A673 (cell line): ENCODE measurements at regions of chr22 and their contacts with region 1.

Region 1: GRCh38 chr22:36123673-36124630 is 36.6 kb downstream of the APOL3 start:
- DNase-seq: peak; percentile 98
- H3K4me3 ChIP-seq: no peak overlapping the region
- H3K27ac ChIP-seq: peak overlapping the region; percentile 63
- H3K4me1 ChIP-seq: peaks cover 8% of the 10 kb centered on the region
- H3K27me3 ChIP-seq: no peaks in the 10 kb centered on the region
- CTCF ChIP-seq: peak; percentile 99

Region 2: GRCh38 chr22:35430897-35431322 is 693.0 kb before region 1 on chr22:
- CTCF ChIA-PET with region 1: interaction called, 3 read pairs
- POLR2A ChIA-PET with region 1: no interaction called
- intact Hi-C with region 1: loop called (anchors 5 kb)
- DNase-seq: peak; percentile 84
- H3K4me3 ChIP-seq: no peak overlapping the region
- H3K27ac ChIP-seq: no peak overlapping the region
- H3K4me1 ChIP-seq: no peaks in the 10 kb centered on the region
- H3K27me3 ChIP-seq: no peaks in the 10 kb centered on the region
- CTCF ChIP-seq: peak; percentile 96

Region 3: DNA sequence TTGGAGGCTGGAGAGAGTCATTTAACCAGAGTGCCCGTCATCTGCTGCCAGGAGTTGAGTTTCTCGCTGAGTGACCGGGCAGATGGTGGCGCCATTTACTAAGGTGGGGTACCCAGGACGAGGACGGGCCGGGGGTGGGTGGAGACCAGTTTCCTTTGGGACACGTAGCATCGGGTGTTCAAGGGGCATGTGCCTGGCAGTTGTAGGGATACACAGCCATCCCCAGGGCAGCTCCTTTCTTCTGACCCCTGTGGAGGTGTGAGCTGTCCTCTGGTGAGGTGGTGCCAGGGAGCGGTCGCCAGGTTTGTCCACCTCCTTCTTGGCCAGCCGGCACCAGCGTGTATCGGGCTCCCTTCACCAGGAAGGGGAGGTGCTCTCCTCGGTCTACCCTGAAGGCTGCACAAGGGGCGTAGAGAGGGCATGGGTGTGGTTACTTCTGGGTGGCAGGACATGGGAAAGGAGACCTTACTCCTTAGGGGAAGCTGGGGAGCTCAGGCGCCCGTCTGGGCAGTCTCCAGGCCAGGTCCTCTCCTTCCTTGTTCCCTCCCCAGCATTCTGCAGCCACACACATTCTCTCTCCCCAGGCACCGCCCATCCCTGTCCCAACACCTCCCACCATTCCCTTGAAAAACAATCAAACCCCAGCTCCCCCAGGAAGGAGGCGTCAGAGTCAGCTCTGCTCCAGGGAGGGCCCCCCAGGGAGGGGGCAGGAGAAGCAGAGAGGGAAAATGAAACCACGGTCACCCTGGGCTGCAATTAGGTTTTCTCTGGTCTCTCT is 496.5 kb before region 1 on chr22:
- CTCF ChIA-PET with region 1: no interaction called
- POLR2A ChIA-PET with region 1: no interaction called
- intact Hi-C with region 1: loop called (anchors 1 kb)
- DNase-seq: peak; percentile 90
- H3K4me3 ChIP-seq: peak overlapping the region; percentile 49
- H3K27ac ChIP-seq: peak overlapping the region; percentile 45
- H3K4me1 ChIP-seq: peaks cover 18% of the 10 kb centered on the region
- H3K27me3 ChIP-seq: no peaks in the 10 kb centered on the region
- CTCF ChIP-seq: peak; percentile 75

Region 4: GRCh38 chr22:35761037-35761436 is 362.9 kb before region 1 on chr22:
- CTCF ChIA-PET with region 1: no interaction called
- POLR2A ChIA-PET with region 1: no interaction called
- intact Hi-C with region 1: loop called (anchors 10 kb)
- DNase-seq: peak; percentile 58
- H3K4me3 ChIP-seq: no peak overlapping the region
- H3K27ac ChIP-seq: no peak overlapping the region
- H3K4me1 ChIP-seq: no peaks in the 10 kb centered on the region
- H3K27me3 ChIP-seq: no peaks in the 10 kb centered on the region
- CTCF ChIP-seq: peak; percentile 63